ENCODE measurements at regions of chr5 and their contacts with region 1.

Region 1: DNA sequence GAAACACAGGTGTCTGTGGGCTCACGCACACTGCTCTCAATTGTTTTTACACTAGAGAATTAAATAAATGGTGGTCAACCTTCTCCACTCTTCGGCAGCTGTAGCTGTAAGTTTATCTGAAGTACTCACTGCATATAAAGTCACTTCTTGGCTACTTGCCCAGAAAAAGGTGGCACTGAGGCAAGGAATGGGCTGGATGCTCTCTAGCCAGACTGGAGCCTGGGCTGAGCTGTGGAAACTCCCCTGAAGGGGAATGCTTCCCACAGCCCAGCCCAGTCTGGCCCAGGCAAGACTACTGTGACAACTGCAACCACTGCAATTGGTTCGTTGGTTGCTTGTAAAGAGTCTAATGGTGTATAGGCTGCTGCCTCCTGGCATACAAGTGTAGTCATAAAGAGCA is 4.5 kb downstream of the LEAP2 start:
- DNase-seq: no peak

Region 2: GRCh38 chr5:132622608-132623007 is 255.3 kb before region 1 on chr5:
- intact Hi-C with region 1: no loop called
- DNase-seq: no peak

Region 3: GRCh38 chr5:134046801-134047686 is 1169.1 kb after region 1 on chr5:
- intact Hi-C with region 1: loop called in 1 of 2 experiments (anchors 5 kb)
- DNase-seq: no peak

Measured in posterior vena cava (tissue), 2 donors.